ENCODE measurements at regions of chr19 and their contacts with region 1.

Region 1: DNA sequence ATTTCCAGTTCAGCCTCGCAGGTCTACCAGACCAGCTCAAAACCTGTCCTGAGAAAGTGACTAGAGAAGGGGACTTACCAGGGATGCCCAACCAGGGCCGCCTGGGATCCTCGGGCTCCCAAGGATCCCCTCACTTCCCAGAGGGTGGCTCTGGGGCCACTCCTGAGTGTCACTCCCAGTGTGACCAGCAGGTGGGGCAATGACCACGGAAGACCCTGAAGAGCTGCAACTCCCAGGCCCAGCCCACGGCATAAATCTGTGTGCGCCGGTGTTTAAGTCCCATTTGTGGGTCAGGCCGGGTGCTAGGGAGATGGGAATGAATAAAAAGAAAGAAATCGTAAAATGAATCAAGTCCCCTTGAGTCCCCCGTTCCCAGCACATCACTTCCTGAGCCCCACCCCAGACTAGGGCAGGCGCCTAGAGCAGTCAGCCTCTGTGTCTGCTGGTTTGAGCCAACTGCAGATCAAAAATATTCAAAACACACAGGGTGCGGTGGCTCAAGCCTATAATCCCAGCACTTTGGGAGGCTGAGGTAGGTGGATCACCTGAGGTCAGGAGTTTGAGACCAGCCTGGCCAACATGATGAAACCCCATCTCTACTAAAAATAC is 10.7 kb downstream of the PTGIR start:
- DNase-seq: peak; percentile 63 to 86 (median 71)
- H3K4me3 ChIP-seq: no peak overlapping the region
- H3K4me3 Mint-ChIP-seq: peak overlapping the region in 5 of 7 donors; percentile 32 to 73 (median 37)
- H3K27ac ChIP-seq: no peak overlapping the region
- H3K27ac Mint-ChIP-seq: peak overlapping the region; percentile 47 to 83 (median 68)
- H3K4me1 ChIP-seq: peaks cover 80% of the 10 kb centered on the region
- H3K4me1 Mint-ChIP-seq: peaks cover 39 to 56% (median 48%) of the 10 kb centered on the region in 3 donors
- H3K27me3 ChIP-seq: no peaks in the 10 kb centered on the region
- H3K27me3 Mint-ChIP-seq: peaks cover 0 to 3% of the 10 kb centered on the region in 2 donors

Region 2: DNA sequence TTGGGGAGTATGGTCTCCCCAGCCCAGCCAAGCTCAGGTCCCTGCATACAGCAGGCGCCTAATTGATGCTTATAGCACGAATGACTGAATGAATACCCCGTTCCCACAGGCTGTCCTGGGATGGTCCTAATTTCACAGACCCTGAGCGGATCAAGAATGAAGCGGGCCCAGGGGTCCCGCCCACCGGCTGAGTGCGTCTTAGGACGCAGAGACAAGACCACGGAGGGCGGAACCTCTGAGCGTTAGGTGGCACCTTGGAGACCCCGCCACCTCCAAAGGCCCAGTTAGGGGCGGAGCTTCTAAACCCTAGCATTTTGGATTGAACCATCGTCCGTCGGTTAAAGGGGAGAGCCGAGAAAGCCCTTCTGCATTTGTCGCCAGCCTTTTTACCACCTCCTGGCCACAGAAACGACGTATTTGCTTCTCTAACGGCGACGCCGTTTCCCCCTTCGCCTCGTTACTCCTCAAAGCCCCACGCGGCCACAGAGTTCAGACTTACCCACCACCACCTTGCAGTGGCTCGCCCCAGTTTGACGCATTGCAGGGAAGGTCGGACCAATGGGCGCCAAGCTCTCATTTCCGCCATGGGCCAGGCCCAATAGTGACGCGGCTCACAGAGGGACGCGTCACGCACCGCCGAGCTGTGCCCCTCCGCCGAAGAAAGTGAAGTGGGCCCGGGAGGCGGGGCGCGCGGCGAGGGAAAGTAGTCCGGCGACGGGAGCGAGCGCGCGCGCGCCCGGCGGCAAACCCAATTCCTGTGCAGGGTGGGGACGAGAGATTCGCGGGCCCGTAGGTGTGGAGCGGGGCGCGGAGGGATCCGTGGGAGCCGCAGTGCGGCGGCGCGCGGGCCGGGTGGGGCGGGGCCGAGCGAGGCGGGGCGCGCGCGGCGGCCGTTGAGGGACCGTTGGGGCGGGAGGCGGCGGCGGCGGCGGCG is 13.6 kb before region 1 on chr19:
- CTCF ChIA-PET with region 1: interaction called, 64 read pairs
- POLR2A ChIA-PET with region 1: interaction called, 52 read pairs
- DNase-seq: peak; percentile 91 to 98 (median 97)
- H3K4me3 ChIP-seq: peak overlapping the region; percentile 88
- H3K4me3 Mint-ChIP-seq: peak overlapping the region; percentile 94 to 100 (median 99)
- H3K27ac ChIP-seq: peak overlapping the region; percentile 100
- H3K27ac Mint-ChIP-seq: peak overlapping the region; percentile 100
- H3K4me1 ChIP-seq: peaks cover 26% of the 10 kb centered on the region
- H3K4me1 Mint-ChIP-seq: peaks cover 28 to 46% (median 36%) of the 10 kb centered on the region in 3 donors
- H3K27me3 ChIP-seq: no peaks in the 10 kb centered on the region
- H3K27me3 Mint-ChIP-seq: peaks cover 0 to 7% of the 10 kb centered on the region in 2 donors

Region 3: GRCh38 chr19:46634045-46634655 is 19.9 kb after region 1 on chr19:
- CTCF ChIA-PET with region 1: interaction called, 10 read pairs
- POLR2A ChIA-PET with region 1: no interaction called
- DNase-seq: peak; percentile 83 to 93 (median 86)
- H3K4me3 ChIP-seq: peak overlapping the region; percentile 72
- H3K4me3 Mint-ChIP-seq: peak overlapping the region; percentile 57 to 76 (median 68)
- H3K27ac ChIP-seq: peak overlapping the region; percentile 35
- H3K27ac Mint-ChIP-seq: peak overlapping the region in 7 of 8 donors; percentile 75 to 93 (median 87)
- H3K4me1 ChIP-seq: peaks cover 30% of the 10 kb centered on the region
- H3K4me1 Mint-ChIP-seq: peaks cover 15 to 22% (median 21%) of the 10 kb centered on the region in 3 donors
- H3K27me3 ChIP-seq: no peaks in the 10 kb centered on the region
- H3K27me3 Mint-ChIP-seq: peaks cover 13 to 34% of the 10 kb centered on the region in 2 donors

Measured in CD8-positive, alpha-beta memory T cell (primary cell).